Mucosa of descending colon (tissue), 3 donors: ENCODE measurements at regions of chr6 and their contacts with region 1.

Region 1: GRCh38 chr6:70706491-70707123 is 38.9 kb downstream of the SMAP1 start:
- DNase-seq: peak in 1 of 3 donors; percentile 48
- ATAC-seq: no peak
- H3K4me3 ChIP-seq: no peak overlapping the region
- H3K4me1 ChIP-seq: peaks cover 14% of the 10 kb centered on the region
- CTCF ChIP-seq: no peak

Region 2: GRCh38 chr6:70884074-70884983 is 177.7 kb after region 1 on chr6:
- intact Hi-C with region 1: loop called (anchors 5 kb)
- DNase-seq: peak in 2 of 3 donors; percentile 45 to 81
- ATAC-seq: peak; percentile 84
- H3K4me3 ChIP-seq: no peak overlapping the region
- H3K4me1 ChIP-seq: no peaks in the 10 kb centered on the region
- CTCF ChIP-seq: peak; percentile 82

Region 3: DNA sequence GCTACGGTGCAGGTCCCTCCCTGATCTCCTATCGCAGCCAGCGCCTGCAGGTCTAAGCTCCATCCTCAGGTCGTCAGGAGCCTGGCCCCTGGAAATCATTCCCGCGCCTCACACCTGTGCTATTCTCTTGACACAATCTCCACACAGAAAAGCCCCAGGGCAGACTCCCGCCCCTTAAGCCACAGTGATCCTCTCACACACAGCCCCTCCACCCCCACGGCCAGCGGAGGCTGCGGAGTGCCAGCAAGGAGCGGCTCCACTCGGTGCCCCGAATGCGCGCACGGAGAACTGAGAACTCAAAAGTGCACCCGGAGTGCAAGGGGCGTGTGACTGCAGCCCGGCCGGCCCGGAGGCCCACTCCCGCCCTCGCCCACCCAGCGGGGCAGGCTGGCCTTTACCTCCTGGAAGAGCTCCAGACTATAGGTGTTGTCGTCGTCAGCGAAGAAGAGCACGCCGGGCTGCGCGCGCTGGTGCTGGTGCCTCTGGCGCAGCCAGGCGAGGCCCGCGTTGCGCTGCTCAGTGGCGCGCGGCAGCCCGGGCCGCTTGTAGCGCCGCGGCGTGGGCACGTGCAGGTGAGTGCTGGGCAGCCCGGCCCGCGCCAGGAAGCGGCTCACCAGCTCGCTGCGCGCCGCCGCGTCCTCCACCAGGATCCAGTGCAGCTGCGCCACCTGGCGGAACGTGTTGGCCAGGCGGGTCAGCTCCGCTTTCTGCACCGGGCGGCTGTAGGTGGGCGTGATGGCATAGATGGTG is 249.0 kb after region 1 on chr6:
- intact Hi-C with region 1: loop called in 1 of 2 experiments (anchors 10 kb)
- DNase-seq: peak; percentile 85 to 93 (median 91)
- ATAC-seq: peak; percentile 99
- H3K4me3 ChIP-seq: no peak overlapping the region
- H3K4me1 ChIP-seq: peaks cover 21% of the 10 kb centered on the region
- CTCF ChIP-seq: peak; percentile 84